ENCODE measurements at regions of chr22 and their contacts with region 1.

Region 1: DNA sequence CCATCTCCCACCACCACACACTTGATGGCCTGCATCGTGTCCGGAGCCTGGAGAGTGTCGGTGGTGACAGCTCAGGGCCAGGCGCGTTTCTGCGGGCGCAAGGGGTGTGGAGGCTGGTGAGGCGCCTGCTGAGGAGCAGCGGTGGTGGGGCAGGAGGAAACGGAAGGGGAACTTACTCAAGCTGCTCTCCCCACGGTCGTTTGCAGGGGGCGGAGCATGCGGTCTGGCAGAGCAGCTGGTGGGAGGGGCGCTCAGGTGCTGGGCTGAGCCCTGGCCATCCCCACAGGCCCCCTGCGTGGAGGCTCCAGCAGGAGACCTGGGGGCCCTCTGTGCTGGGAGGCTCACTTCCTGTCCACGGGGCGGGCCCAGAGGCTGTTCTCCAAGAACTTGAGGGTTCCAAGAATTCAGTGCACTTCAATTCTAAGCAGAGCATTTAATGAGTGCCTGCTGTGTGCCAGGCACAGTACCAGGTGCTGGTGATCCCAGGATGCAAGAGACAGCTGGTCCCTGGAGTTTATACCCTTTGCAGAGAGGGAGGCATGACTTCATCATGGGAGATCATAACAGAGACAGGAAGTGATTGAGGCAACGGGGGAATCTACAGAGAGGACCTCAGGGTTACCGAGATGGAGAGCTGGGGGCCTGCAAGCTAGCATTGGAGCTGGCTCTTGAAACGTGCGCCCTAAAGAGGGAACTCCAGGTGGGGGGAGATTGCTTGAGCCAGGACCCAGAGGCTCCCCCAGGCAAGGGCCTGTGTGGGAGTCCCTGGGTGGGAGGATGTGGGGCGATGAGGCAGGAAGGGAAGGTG is at the start of gene RAC2:
- DNase-seq: peak; percentile 71 to 92 (median 79)
- ATAC-seq: peak; percentile 62 to 65
- H3K4me3 Mint-ChIP-seq: peak within 1 kb of the TSS; percentile 80 to 99 (median 98)
- H3K27ac Mint-ChIP-seq: peak within 1 kb of the TSS; percentile 68 to 100 (median 98)
- H3K4me1 Mint-ChIP-seq: peaks cover 27 to 49% (median 48%) of the 10 kb centered on the region in 4 donors
- H3K27me3 Mint-ChIP-seq: no peaks in the 10 kb centered on the region
- polyA plus RNA-seq, gene RAC2: 740 to 1,115 (median 1,110) TPM

Region 2: GRCh38 chr22:36954211-36954891 is 290.0 kb before region 1 on chr22:
- POLR2A ChIA-PET with region 1: no interaction called
- DNase-seq: no peak
- ATAC-seq: no peak
- H3K4me3 Mint-ChIP-seq: no peak overlapping the region
- H3K27ac Mint-ChIP-seq: no peak overlapping the region
- H3K4me1 Mint-ChIP-seq: peaks cover 0 to 11% (median 0%) of the 10 kb centered on the region in 4 donors
- H3K27me3 Mint-ChIP-seq: peaks cover 7 to 40% (median 30%) of the 10 kb centered on the region in 5 donors

Region 3: DNA sequence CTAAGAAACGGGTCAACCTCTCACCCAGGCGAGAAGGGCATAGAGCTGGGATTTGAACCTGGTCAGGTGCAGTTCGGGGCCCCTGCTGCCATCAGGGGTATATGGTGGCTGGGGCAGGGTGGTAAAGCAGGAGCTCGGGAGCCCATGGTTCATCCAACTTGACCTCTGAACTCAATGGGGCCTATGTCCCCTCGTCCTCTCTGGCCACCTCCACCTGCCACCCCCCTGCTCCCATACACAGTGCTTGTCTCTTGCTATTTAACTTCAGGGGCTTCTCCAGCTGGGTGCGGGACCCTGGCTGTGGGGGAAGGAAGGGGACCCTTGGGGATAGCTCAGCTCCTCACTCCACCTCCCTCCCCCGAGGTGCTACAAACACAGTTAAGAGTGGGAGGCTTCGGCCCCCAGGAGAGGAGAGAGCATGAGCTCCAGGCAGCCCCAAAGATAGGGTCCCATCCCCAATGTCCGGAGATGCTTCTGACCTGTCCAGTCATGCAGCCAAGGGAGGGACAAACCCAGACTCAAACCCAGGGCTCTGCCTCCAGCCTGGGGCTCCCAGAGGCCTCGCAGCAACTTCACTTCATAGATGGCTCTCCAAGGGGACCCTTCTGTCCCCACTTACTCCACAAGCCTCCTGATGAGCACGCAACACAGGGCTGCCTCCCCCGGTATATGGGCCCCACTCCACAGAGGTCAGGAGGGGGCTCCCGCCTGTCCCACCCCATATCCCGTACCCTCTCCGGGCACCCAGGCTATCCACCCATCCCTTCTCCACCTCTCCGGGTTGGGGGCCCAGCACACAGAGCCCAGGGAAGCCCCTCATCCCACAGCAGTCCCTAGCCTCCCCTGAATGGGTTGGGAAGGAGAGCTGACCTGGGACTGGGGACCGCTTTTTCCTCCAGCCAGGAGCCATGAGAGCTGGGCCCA is 95.3 kb before region 1 on chr22:
- POLR2A ChIA-PET with region 1: interaction called, 21 read pairs
- DNase-seq: peak in 1 of 10 donors; percentile 51
- ATAC-seq: peak in 1 of 2 donors; percentile 17
- H3K4me3 Mint-ChIP-seq: peak overlapping the region; percentile 89 to 94 (median 90)
- H3K27ac Mint-ChIP-seq: peak overlapping the region; percentile 96 to 99 (median 98)
- H3K4me1 Mint-ChIP-seq: peaks cover 40 to 78% (median 65%) of the 10 kb centered on the region in 4 donors
- H3K27me3 Mint-ChIP-seq: no peaks in the 10 kb centered on the region

Region 4: DNA sequence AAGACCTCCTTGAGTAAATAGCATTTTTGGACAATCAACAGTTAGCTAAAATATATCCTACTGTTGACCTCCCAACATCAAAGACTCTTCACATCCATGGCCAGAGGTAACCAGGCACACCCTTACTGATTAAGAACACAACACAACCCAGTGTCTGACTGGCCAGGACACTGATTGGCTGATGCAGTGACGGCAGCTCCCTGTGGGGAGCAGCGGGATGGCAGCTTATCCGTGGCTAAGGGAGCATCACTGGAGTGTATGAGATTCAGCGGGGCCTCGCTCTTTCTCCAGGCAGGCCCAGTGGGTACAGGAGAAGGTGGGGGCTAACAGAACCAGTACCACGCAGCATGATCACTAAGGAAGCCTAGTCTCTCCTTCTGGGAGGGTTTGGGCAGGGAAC is 84.3 kb before region 1 on chr22:
- POLR2A ChIA-PET with region 1: no interaction called
- DNase-seq: no peak
- ATAC-seq: no peak
- H3K4me3 Mint-ChIP-seq: peak overlapping the region in 1 of 10 donors; percentile 14
- H3K27ac Mint-ChIP-seq: peak overlapping the region in 7 of 10 donors; percentile 31 to 77 (median 60)
- H3K4me1 Mint-ChIP-seq: peaks cover 19 to 77% (median 44%) of the 10 kb centered on the region in 4 donors
- H3K27me3 Mint-ChIP-seq: no peaks in the 10 kb centered on the region

Region 5: DNA sequence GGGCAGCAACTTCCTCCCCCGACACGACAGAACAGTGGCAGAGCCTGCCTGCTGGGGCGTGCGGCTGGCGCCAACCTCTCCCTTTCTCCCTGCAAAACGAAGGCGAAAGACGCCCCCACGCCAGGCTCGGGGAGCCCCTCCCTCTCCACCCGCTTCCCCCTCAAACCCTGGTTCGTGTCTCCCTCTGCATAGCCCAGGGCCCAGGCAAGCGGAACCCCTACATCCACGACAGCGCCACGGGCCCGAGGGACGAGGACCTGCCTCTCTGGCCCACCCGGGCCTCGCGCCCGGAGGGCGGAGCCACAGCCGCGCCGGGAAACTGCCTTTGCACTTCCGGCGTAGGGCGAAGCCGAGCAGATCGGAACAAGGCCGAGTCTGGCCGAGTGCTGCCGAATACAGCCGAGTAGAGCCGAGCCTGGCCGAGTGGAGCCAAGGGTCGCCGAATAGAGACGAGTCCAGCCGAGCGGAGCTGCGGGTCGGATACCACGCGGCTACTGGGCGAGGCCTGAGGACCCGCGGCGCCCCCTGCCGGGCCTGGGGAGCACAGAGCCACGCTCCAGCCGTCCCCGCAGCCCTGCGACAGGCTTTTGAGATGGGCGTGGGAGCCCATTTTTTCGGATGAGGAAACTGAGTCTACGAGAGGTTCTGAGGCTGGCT is 45.1 kb before region 1 on chr22:
- POLR2A ChIA-PET with region 1: interaction called, 1,090 read pairs
- DNase-seq: peak; percentile 95 to 100 (median 99)
- ATAC-seq: peak; percentile 91 to 94
- H3K4me3 Mint-ChIP-seq: peak overlapping the region; percentile 82 to 93 (median 88)
- H3K27ac Mint-ChIP-seq: peak overlapping the region; percentile 85 to 100 (median 96)
- H3K4me1 Mint-ChIP-seq: peaks cover 15 to 82% (median 76%) of the 10 kb centered on the region in 4 donors
- H3K27me3 Mint-ChIP-seq: no peaks in the 10 kb centered on the region

Region 6: GRCh38 chr22:37260901-37261336 is 16.6 kb after region 1 on chr22:
- POLR2A ChIA-PET with region 1: interaction called, 180 read pairs
- DNase-seq: peak in 9 of 10 donors; percentile 41 to 83 (median 61)
- ATAC-seq: peak; percentile 76 to 85
- H3K4me3 Mint-ChIP-seq: peak overlapping the region in 6 of 10 donors; percentile 9 to 53 (median 30)
- H3K27ac Mint-ChIP-seq: peak overlapping the region; percentile 10 to 90 (median 54)
- H3K4me1 Mint-ChIP-seq: peaks cover 16 to 26% (median 24%) of the 10 kb centered on the region in 4 donors
- H3K27me3 Mint-ChIP-seq: peaks cover 0 to 1% (median 0%) of the 10 kb centered on the region in 5 donors

Region 7: DNA sequence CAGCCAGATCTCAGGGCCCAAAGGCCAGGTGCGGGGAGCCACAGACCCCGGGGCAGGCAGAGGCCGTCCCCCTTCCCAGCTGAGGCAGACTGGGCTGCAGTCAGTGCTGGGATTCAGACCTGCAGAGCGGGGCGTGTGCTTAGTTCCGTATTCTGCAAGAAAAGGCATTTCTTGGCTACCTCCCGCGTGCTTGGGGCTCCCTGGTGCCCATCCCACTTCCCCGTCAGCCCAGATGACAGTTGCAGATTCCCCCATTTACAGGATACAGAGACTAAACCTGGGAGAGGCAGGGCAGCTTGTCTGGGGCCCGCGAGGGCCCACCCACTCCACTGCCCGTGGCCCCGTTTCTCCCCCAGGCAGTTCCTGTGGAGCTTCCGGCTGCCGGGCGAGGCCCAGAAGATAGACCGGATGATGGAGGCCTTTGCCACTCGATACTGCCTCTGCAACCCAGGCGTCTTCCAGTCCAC is 56.3 kb after region 1 on chr22:
- POLR2A ChIA-PET with region 1: interaction called, 19 read pairs
- DNase-seq: peak in 9 of 10 donors; percentile 35 to 76 (median 43)
- ATAC-seq: peak; percentile 84 to 85
- H3K4me3 Mint-ChIP-seq: peak overlapping the region; percentile 25 to 86 (median 76)
- H3K27ac Mint-ChIP-seq: peak overlapping the region; percentile 92 to 99 (median 95)
- H3K4me1 Mint-ChIP-seq: peaks cover 33 to 93% (median 82%) of the 10 kb centered on the region in 4 donors
- H3K27me3 Mint-ChIP-seq: no peaks in the 10 kb centered on the region

Region 8: DNA sequence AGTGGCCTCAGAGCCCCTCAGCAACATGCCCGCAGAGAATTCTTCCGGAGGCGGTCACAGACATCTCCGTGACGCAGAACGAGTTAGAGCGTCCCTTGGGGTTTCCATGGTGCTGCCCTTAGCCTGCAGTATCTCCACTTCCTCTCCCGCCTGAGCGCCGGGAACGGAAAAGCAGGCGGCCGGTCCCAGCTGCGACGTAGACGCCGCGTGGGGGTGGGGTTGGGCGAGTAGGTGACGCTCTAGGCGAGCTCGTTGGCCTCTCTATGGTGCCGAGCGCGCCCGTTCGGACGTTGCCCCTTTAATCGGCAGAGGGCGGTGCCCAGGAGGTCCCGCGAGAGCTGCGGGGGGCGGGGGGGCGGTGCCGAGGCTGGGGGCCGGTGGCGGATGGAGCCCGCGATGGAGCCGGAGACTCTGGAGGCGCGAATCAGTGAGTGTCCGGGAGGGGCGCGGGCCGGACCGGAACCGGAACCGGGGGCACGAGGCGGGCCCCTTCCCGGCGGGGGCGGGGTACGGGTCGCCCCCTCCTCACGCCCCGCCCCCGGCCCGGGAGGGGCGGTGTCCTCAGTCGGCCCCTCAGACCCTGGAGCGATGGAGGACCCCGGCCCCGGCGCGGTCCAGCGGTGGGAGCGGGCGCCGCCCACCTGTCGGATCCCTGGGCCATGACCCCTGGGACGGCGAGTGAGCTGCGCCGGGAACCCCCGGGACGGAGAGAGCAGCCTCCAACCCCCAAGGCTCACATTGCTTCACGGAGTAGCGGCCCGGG is 364.3 kb after region 1 on chr22 and contains the start of gene GGA1:
- POLR2A ChIA-PET with region 1: interaction called, 12 read pairs
- DNase-seq: peak; percentile 92 to 99 (median 97)
- ATAC-seq: peak; percentile 74 to 78
- H3K4me3 Mint-ChIP-seq: peak within 1 kb of the TSS; percentile 88 to 96 (median 93)
- H3K27ac Mint-ChIP-seq: peak within 1 kb of the TSS; percentile 95 to 99 (median 98)
- H3K4me1 Mint-ChIP-seq: peaks cover 30 to 68% (median 62%) of the 10 kb centered on the region in 4 donors
- H3K27me3 Mint-ChIP-seq: no peaks in the 10 kb centered on the region
- polyA plus RNA-seq, gene GGA1: 20.3 to 24.5 (median 22.6) TPM